Body of pancreas (tissue), 4 donors: ENCODE measurements at regions of chr2 and their contacts with region 1.

Region 1: GRCh38 chr2:21317131-21317530 is 193.4 kb downstream of the TDRD15 start:
- DNase-seq: peak; percentile 60 to 72 (median 66)
- ATAC-seq: peak; percentile 43
- H3K4me3 ChIP-seq: no peak overlapping the region
- H3K27ac ChIP-seq: peak overlapping the region in 3 of 4 donors; percentile 22 to 58 (median 55)
- H3K4me1 ChIP-seq: peaks cover 14% of the 10 kb centered on the region
- H3K27me3 ChIP-seq: no peaks in the 10 kb centered on the region
- CTCF ChIP-seq: peak; percentile 38 to 75 (median 59)
- POLR2A ChIP-seq: no peak

Region 2: DNA sequence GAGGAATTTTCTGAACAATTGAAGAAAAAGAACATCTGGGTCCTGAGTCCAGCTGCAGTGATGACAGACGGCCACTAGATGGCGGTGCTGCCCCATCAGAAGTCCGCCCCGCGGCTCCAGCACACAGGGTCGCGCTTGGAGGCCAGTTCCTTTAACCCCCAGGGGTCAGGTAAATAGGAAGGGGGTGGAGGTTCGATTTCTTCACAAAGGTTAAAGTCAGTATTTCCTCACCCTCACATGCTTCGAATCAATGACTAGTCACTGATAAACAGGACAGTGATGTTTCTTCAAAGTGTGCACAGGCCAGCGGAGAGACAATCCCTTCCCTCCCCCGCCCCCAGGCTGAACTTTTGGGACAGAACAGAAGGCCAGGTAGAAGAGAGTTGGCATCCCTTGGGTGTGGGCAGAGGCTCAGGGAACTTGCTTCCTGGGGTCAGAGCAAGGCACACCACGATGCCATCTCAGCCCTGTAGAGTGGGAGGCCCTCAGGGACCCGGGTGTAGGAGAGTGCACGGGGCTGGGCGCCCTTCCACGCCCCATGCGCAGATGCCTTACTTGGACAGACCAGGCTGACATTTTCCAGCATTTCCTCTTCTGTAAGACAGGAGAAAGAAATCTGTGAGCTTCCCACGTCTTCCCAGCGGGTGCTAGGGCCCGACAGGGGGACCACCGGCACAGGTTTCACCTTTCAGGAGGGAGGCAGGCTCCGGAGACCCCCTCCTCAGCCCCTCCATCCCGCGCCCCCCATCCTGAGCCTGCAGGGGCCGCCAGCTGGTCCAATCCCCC is 274.0 kb before region 1 on chr2:
- intact Hi-C with region 1: loop called (anchors 5 kb)
- DNase-seq: peak; percentile 52 to 75 (median 69)
- ATAC-seq: peak; percentile 70
- H3K4me3 ChIP-seq: no peak overlapping the region
- H3K27ac ChIP-seq: no peak overlapping the region
- H3K4me1 ChIP-seq: peaks cover 20% of the 10 kb centered on the region
- H3K27me3 ChIP-seq: peaks cover 0 to 12% of the 10 kb centered on the region in 2 donors
- CTCF ChIP-seq: peak; percentile 93 to 99 (median 94)
- POLR2A ChIP-seq: no peak

Region 3: DNA sequence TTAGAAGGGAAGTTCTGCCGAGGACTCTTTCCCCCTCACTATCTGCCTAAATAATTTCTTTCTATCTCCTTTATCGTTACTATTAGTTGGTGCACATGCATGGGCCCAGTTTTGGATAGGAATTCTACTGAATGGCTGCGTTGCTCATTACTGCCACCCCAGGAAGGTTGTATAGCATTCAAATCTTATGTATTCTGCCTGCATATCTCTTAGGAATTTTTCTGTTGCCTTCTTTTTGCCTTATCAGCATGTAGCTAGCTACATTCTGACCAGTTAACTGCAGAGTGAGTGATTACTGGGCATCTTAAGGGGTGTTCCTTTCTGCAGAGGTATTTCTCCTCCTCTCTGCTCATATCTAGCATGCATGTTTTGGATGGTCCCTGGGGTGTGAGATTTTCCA is 46.2 kb after region 1 on chr2:
- intact Hi-C with region 1: no loop called
- DNase-seq: no peak
- ATAC-seq: no peak
- H3K4me3 ChIP-seq: no peak overlapping the region
- H3K27ac ChIP-seq: no peak overlapping the region
- H3K4me1 ChIP-seq: no peaks in the 10 kb centered on the region
- H3K27me3 ChIP-seq: no peaks in the 10 kb centered on the region
- CTCF ChIP-seq: no peak
- POLR2A ChIP-seq: no peak